ENCODE measurements at regions of chrX and their contacts with region 1.

Region 1: DNA sequence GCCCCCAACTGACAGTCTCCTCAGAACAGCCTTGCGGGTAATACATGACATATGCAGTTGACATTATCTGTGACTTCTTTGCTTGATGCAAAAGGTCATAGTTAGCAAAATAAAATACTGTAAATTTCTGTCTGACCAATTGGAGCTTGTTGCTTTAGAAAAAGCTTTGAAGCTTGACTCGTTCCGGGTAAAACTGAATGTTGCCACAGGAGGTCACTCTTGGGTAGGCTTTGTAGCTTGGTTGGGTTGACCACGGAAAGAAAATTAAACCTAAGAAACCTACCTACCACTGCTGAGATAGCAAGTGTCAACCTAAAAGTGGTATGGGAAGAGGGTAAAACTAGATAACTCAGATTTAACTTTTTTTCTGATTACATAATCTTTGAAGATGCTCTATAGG is 23.2 kb downstream of the PRPS2 start:
- DNase-seq: peak; percentile 52
- H3K4me3 ChIP-seq: no peak overlapping the region
- H3K27ac ChIP-seq: no peak overlapping the region
- H3K4me1 ChIP-seq: no peaks in the 10 kb centered on the region
- H3K27me3 ChIP-seq: no peaks in the 10 kb centered on the region
- CTCF ChIP-seq: peak; percentile 61

Region 2: GRCh38 chrX:12894074-12895030 is 79.9 kb after region 1 on chrX:
- CTCF ChIA-PET with region 1: interaction called, 5 read pairs
- POLR2A ChIA-PET with region 1: no interaction called
- intact Hi-C with region 1: loop called (anchors 1 kb)
- DNase-seq: peak; percentile 52
- H3K4me3 ChIP-seq: no peak overlapping the region
- H3K27ac ChIP-seq: no peak overlapping the region
- H3K4me1 ChIP-seq: no peaks in the 10 kb centered on the region
- H3K27me3 ChIP-seq: no peaks in the 10 kb centered on the region
- CTCF ChIP-seq: peak; percentile 81

Region 3: GRCh38 chrX:13263560-13264251 is 449.3 kb after region 1 on chrX:
- CTCF ChIA-PET with region 1: no interaction called
- POLR2A ChIA-PET with region 1: no interaction called
- intact Hi-C with region 1: no loop called
- DNase-seq: no peak
- H3K4me3 ChIP-seq: no peak overlapping the region
- H3K27ac ChIP-seq: no peak overlapping the region
- H3K4me1 ChIP-seq: no peaks in the 10 kb centered on the region
- H3K27me3 ChIP-seq: no peaks in the 10 kb centered on the region
- CTCF ChIP-seq: no peak